Right ventricle myocardium inferior (tissue), 1 donor: ENCODE measurements at regions of chr9 and their contacts with region 1.

Region 1: GRCh38 chr9:136545966-136546698 is at the start of gene NOTCH1:
- DNase-seq: peak; percentile 98
- ATAC-seq: peak; percentile 86
- total RNA-seq, gene NOTCH1: 18.7 TPM

Region 2: DNA sequence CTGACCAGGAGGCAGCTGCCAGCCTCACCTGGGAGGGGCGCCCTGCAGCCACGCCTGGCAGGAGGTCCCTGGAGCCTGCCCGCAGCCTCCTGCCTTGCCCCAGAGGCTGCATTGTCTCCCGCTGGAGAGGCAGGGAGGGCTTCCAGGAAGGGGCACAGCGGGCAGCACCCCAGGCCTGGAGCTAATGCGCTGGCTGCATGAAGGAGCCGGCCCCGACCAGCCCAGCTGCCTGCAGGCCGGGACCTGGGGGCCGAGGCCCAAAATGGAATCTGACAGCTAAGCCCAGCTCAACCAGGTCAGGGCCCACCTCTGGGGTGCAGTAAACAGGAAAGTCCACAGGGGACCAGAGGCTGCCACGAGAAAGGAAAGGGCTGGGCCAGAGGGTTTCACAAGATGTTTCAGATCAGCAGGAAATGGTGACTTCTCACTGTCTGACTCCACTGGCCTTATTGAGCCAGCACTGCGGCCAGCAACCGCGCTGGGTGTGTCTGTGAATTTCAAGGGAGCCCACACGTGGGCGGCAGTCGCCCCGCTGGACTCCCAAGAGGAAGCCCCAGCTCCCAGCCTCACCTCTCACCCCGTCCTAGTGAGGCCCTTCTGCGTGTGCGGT is 18.4 kb after region 1 on chr9:
- intact Hi-C with region 1: loop called (anchors 2 kb)
- DNase-seq: peak; percentile 94
- ATAC-seq: peak; percentile 63

Region 3: GRCh38 chr9:136599811-136600660 is 53.9 kb after region 1 on chr9:
- intact Hi-C with region 1: no loop called
- DNase-seq: peak; percentile 66
- ATAC-seq: peak; percentile 17